Common myeloid progenitor, CD34-positive (primary cell): ENCODE measurements at regions of chr2 and their contacts with region 1.

Region 1: GRCh38 chr2:74529357-74530238 is at the starts of genes AUP1 and HTRA2:
- DNase-seq: peak; percentile 76 to 87 (median 79)
- H3K4me3 ChIP-seq: peak within 1 kb of the TSS; percentile 77 to 96 (median 86)
- H3K27ac ChIP-seq: peak within 1 kb of the TSS; percentile 80 to 86
- H3K4me1 ChIP-seq: peaks cover 6 to 43% (median 25%) of the 10 kb centered on the region in 4 experiments
- H3K27me3 ChIP-seq: no peaks in the 10 kb centered on the region

Region 2: DNA sequence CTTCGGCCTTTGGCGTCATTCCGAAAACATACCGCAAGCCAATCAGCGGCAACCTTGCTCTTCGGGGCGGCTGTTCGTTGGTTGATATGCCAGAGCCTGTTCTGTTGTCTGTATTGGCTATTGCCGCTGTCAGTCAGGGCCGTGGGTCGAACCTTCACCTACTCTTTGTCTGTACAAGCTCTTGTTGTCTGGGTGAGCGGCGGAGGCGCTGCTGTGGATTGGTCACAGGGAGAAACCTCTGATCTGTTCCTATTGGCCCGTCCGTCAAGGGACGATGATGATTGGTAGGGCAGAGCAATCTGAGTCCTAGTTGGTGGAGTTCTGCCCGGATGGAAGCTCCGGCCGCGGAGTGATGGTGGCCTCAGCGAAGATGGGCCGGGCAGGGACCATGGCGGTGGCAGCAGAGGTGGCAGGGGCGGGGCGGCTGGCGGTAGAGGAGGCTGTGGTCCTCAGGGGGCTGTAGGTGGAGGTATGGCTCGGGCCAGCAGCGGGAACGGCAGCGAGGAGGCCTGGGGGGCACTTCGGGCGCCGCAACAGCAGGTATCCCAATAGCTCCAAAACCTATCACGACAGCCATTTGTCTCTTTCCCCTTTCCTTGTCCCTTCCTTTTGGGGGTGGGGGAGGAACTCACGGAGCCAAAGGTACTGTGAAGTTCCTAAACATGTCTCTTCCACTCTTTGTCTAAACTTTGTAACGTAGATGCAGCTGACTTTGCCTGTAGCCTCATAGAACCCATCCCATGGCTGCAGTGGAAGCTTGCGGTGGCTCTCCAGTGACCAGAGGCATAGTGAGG is 71.3 kb before region 1 on chr2 and contains the start of gene WBP1:
- CTCF ChIA-PET with region 1: interaction called, 18 read pairs
- POLR2A ChIA-PET with region 1: interaction called, 4 read pairs
- DNase-seq: peak; percentile 100
- H3K4me3 ChIP-seq: peak within 1 kb of the TSS; percentile 49 to 98 (median 84)
- H3K27ac ChIP-seq: peak within 1 kb of the TSS; percentile 88 to 94
- H3K4me1 ChIP-seq: peaks cover 6 to 48% (median 33%) of the 10 kb centered on the region in 4 experiments
- H3K27me3 ChIP-seq: no peaks in the 10 kb centered on the region

Region 3: GRCh38 chr2:74482801-74483674 is 46.6 kb before region 1 on chr2 and contains the starts of genes CCDC142 and TTC31:
- CTCF ChIA-PET with region 1: interaction called, 53 read pairs
- POLR2A ChIA-PET with region 1: interaction called, 15 read pairs
- DNase-seq: peak; percentile 94 to 96 (median 96)
- H3K4me3 ChIP-seq: peak within 1 kb of the TSS; percentile 88 to 100 (median 94)
- H3K27ac ChIP-seq: peak within 1 kb of the TSS; percentile 61 to 81
- H3K4me1 ChIP-seq: peaks cover 4 to 27% (median 23%) of the 10 kb centered on the region in 4 experiments
- H3K27me3 ChIP-seq: no peaks in the 10 kb centered on the region

Region 4: DNA sequence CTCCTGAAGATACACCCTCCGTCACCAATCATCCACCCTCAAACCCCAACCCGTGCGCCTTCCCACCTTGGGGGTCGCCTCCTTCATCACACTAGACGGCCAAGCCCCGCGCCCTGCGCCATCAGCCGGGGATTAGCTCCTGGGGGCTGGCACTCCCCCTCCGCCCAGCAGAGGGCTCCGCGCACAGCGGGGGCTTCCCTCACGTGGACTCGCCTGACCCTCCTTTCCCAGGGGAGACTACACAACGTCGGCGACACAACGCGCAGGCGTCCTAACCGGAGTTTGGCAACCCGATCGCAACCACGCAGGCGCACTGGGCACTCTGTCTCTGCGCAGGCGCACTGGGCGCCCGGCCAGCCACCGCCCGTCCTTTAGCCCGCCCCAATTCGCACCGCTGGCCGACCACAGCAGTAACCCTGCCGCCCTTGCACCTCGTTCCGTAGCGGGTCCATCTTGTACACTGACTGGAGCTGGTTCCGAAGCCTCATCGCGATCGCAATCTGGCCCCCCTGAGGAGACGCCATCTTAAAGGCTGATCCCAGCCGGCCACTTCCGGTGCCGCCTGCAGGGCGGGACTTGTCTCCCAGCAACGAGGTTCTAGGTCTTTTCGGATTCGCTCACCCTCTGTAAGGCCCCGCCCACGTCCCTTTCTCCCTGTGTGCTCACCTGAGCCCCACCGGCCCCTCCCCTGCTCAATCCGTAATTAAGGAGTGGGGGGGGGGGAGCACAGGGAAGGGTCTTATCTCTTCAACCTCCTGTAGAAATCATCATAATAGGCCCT is 22.3 kb before region 1 on chr2 and contains the start of gene PCGF1:
- CTCF ChIA-PET with region 1: interaction called, 143 read pairs
- POLR2A ChIA-PET with region 1: interaction called, 9 read pairs
- DNase-seq: peak; percentile 97 to 98 (median 97)
- H3K4me3 ChIP-seq: peak within 1 kb of the TSS; percentile 80 to 99 (median 91)
- H3K27ac ChIP-seq: peak within 1 kb of the TSS; percentile 92 to 96
- H3K4me1 ChIP-seq: peaks cover 0 to 52% (median 34%) of the 10 kb centered on the region in 4 experiments
- H3K27me3 ChIP-seq: peaks cover 7 to 63% (median 33%) of the 10 kb centered on the region in 5 experiments

Region 5: GRCh38 chr2:74515981-74516633 is 13.5 kb before region 1 on chr2:
- CTCF ChIA-PET with region 1: interaction called, 53 read pairs
- POLR2A ChIA-PET with region 1: interaction called, 3 read pairs
- DNase-seq: peak in 2 of 3 donors; percentile 70 to 73
- H3K4me3 ChIP-seq: peak overlapping the region in 6 of 7 experiments; percentile 26 to 64 (median 52)
- H3K27ac ChIP-seq: no peak overlapping the region
- H3K4me1 ChIP-seq: peaks cover 0 to 38% (median 30%) of the 10 kb centered on the region in 4 experiments
- H3K27me3 ChIP-seq: peaks cover 13 to 95% (median 56%) of the 10 kb centered on the region in 5 experiments

Region 6: GRCh38 chr2:74548900-74549826 is 19.6 kb after region 1 on chr2:
- CTCF ChIA-PET with region 1: interaction called, 50 read pairs
- POLR2A ChIA-PET with region 1: no interaction called
- DNase-seq: peak in 1 of 3 donors; percentile 37
- H3K4me3 ChIP-seq: peak overlapping the region; percentile 67 to 89 (median 76)
- H3K27ac ChIP-seq: peak overlapping the region in 1 of 2 experiments; percentile 59
- H3K4me1 ChIP-seq: peaks cover 6 to 57% (median 41%) of the 10 kb centered on the region in 4 experiments
- H3K27me3 ChIP-seq: no peaks in the 10 kb centered on the region

Region 7: DNA sequence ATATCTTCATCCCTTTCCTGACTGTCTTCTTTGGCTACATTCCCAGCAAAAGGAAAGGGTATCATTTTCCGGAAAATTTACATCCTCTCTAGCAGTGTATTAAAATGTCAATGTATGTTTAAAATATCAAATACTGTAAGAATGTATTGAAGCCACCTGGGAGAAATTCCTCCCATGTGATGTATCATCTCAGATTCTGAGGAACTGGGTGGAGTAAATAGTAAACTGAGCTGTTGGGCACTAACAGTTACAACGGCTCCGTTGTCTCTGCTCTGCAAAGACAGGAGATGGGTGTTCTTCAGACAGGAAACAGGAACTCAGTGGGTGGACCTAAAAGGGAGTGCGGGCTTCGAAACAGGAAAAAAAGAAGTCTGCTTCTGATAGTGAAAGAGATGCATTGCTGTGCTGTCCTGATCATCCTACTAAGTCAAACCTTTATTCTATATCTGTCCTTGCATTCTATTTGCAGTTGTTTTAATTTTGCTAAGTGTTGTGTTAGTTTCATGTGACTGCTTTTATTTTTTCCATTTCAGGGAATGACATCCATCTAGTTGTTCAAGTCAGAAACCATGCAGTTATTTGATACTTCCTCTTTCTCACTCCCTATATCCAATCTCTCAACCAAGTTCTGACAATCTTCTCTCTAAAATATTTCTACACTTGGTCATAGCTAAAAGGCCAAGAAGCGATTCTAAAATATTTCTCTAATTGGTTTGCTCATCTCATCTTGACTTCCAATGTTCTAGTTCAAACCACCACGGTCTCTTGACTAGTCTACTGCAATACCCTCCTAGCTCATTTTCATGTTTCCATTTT is 44.4 kb after region 1 on chr2:
- CTCF ChIA-PET with region 1: interaction called, 55 read pairs
- POLR2A ChIA-PET with region 1: interaction called, 4 read pairs
- DNase-seq: peak; percentile 58 to 70 (median 59)
- H3K4me3 ChIP-seq: peak overlapping the region in 4 of 7 experiments; percentile 40 to 52 (median 50)
- H3K27ac ChIP-seq: peak overlapping the region in 1 of 2 experiments; percentile 32
- H3K4me1 ChIP-seq: peaks cover 44 to 89% (median 60%) of the 10 kb centered on the region in 4 experiments
- H3K27me3 ChIP-seq: no peaks in the 10 kb centered on the region